Activated T-helper 1 cell treated with anti-CD3 and anti-CD28 coated beads, Interleukin-12 subunit alpha, Interleukin-12 subunit beta, Interleukin-2, Interleukin-4 antibody, amounts not matched to agents 30 ng/mL and 10 ng/mL and 1 ng/mL, durations not matched to agents 14 hours and 24 hours and 36 hours (primary cell): ENCODE measurements at regions of chr15 and their contacts with region 1.

Region 1: GRCh38 chr15:94670438-94671034 is 439.2 kb downstream of the MCTP2 start:
- DNase-seq: no peak
- H3K4me3 Mint-ChIP-seq: no peak overlapping the region
- H3K27ac Mint-ChIP-seq: no peak overlapping the region
- H3K4me1 Mint-ChIP-seq: peaks cover 21% of the 10 kb centered on the region
- H3K27me3 Mint-ChIP-seq: peaks cover 52% of the 10 kb centered on the region

Region 2: DNA sequence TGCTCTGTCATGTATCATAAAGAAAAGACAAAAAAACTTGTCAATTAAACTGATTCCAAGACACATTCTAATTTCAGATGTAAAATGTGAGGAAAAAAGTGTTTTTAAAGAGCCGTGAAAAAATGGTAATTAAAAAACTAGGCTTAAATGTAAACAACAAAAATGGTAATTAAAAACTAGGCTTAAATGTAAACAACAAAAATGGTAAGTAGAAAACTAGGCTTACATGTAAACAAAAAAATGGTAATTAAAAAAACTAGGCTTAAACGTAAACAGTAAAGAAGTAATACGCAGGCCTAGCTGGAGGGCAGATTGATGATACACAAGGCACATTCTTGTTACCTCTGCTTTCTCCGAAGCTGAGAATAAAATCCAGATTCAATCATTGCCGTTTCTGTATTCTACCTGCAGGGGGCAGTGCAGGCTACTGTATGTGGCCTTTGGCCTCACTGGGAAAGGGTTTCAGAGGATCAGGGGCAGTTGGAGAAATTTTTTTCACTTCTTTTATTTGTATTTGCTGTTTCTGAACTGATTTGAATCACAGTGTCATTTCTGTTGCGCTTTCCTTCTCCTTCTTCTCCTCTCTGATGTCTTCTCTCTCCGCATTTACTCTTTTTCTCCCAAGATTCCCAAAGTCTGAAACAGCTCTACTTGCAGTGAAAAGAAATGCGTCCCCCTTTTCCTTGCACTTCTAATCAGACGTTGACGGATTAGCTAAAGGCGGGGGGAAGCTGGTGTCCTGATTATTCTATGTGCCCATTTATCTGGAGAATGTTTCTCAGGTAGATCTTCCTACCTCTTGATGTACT is 506.3 kb before region 1 on chr15:
- intact Hi-C with region 1: loop called (anchors 1 kb)
- DNase-seq: peak; percentile 44
- H3K4me3 Mint-ChIP-seq: no peak overlapping the region
- H3K27ac Mint-ChIP-seq: no peak overlapping the region
- H3K4me1 Mint-ChIP-seq: peaks cover 10% of the 10 kb centered on the region
- H3K27me3 Mint-ChIP-seq: peaks cover 2% of the 10 kb centered on the region

Region 3: DNA sequence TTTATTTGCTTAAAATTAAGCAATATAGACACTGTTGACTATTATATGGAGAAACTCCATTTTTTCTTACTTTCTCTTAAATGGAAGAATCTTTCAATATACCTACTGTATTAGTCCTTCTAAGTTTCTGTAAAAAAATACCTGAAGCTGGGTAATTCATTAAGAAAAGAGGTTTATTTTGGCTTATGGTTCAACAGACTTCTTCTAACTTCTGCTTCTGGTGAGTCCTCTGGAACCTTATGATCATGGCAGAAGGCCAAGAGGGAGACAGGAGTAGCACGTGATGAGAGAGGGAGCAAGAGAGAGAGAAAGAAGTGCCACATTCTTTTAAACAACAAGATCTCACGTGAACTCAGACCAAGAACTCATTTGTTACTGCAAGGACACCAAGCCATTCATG is 134.1 kb after region 1 on chr15:
- intact Hi-C with region 1: no loop called
- DNase-seq: no peak
- H3K4me3 Mint-ChIP-seq: no peak overlapping the region
- H3K27ac Mint-ChIP-seq: no peak overlapping the region
- H3K4me1 Mint-ChIP-seq: no peaks in the 10 kb centered on the region
- H3K27me3 Mint-ChIP-seq: peaks cover 2% of the 10 kb centered on the region

Region 4: GRCh38 chr15:95291898-95292472 is 621.4 kb after region 1 on chr15:
- intact Hi-C with region 1: loop called (anchors 5 kb)
- DNase-seq: no peak
- H3K4me3 Mint-ChIP-seq: no peak overlapping the region
- H3K27ac Mint-ChIP-seq: no peak overlapping the region
- H3K4me1 Mint-ChIP-seq: peaks cover 47% of the 10 kb centered on the region
- H3K27me3 Mint-ChIP-seq: peaks cover 40% of the 10 kb centered on the region

Region 5: DNA sequence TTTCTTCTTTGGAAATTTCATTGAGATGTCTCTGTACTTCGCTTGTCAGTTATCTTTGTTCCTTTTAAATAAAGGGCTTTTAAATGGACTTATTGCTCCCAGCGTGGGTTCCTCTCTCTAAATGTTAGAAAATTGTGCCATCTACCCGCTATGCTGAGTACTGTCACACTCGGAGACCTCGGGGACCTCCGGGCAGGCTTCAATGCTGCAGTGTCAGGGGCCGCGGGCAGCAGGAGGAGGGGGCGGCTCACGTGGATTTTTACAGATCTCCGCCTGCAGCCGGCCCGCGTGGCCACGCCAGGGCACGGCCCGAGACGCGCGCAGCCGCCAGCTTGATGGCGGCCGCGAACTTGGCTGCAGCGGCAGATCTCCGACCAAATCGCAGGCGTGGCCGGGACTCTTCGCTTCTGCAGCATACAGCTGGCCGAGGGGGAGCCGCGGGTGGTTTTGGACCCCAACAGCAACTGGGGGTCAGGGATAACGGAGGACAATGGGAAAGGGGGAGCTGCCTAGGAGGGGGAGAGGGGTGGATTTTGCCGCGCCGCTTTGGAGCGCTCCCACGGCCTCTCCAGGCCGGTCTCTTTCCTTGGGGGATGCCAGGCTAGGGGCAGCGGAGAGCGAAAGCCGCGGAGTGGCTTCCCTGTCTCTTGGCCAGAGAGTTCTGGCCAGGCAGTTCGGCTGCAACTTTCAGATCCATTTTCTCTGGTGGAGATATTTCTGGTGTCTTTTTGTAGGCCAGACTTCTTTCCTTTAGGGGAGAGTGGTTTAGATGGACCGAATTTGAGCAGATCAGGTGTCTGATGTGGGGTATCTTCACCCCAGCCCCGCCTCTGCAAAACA is 1675.2 kb after region 1 on chr15:
- intact Hi-C with region 1: loop called (anchors 5 kb)
- DNase-seq: no peak
- H3K4me3 Mint-ChIP-seq: peak overlapping the region; percentile 0
- H3K27ac Mint-ChIP-seq: peak overlapping the region; percentile 31
- H3K4me1 Mint-ChIP-seq: peaks cover 4% of the 10 kb centered on the region
- H3K27me3 Mint-ChIP-seq: peaks cover 87% of the 10 kb centered on the region